ENCODE measurements at regions of chr6 and their contacts with region 1.

Region 1: GRCh38 chr6:168226061-168226752 is 93.4 kb downstream of the DACT2 start:
- DNase-seq: peak in 1 of 10 donors; percentile 34

Region 2: DNA sequence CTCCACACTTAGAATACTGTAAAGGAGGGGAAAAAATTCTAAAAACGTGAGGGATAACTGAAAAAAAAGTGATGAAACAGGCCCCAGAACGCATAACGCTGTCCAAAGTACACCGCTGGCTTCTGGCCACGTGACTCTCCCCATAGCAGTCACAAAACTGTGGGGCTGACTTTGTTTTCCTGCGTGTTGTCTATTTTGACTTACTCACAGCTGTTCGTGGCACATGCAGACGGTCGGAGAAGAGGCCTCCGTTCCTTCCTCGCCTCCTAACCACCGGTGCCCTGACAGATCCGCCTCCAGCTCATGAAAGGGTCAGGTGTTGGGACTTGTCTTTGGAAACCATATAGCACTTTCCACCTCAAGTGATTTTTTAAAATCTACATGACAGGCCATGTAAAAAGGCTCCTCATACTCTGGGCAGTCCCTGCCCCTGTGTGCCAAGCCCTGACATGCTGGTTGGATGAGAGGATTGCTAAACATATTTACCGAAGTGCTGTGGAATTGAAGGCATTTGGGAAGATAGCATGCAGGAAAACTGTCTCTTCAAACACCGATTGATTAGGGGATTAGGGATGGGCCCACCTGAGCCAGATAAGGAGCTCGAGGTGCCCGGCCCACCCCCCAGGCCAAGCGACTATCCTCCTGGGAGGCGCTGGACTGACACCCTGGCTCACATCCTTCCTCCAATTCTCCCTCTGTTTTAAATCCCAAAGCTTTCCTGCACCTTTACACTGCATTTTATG is 38.6 kb after region 1 on chr6:
- intact Hi-C with region 1: no loop called
- DNase-seq: peak in 1 of 10 donors; percentile 61

Region 3: DNA sequence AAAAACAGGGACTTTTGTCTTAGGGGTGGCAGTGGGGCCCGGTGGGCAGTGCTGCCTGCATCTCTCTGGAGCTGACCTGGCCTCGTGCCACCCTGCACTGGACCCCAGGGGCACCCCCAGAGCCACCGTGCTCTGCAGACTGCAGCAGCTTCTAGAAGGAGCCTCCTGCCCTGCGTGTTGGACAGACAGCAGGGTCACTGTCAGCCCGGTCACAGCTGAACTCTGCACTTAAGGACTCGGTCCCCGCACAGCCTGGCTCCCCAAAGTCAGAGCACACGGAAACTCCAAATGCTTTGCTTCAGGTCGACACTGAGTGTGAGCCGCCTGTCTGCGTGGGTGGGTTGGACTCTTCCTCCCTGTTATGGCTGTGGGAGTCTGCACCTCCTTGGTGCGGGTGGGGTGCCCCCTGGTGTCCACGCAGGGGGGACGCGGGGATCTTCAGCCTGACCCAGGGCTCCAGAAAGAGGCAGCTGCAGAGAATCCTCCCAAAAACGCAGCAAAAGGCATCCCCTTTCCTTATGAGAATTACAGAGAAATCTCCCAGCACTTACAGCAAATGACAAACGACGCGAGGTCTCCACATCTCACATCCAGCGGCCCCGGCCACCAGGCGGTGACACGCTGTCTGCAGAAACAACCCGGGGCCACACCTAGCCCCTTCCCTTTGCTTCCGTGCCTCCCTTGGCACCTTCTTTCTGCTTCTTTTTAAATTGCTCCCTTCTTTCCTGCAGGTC is 129.7 kb after region 1 on chr6:
- intact Hi-C with region 1: loop called (anchors 10 kb)
- DNase-seq: peak in 7 of 10 donors; percentile 47 to 95 (median 62)

Measured in posterior cingulate gyrus (tissue), 11 donors.